SK-N-SH (cell line): ENCODE measurements at regions of chr20 and their contacts with region 1.

Region 1: GRCh38 chr20:44475694-44476560 is at the start of gene TTPAL:
- DNase-seq: peak; percentile 97
- H3K4me3 ChIP-seq: peak within 1 kb of the TSS; percentile 81 to 82
- H3K27ac ChIP-seq: peak within 1 kb of the TSS; percentile 72 to 89
- H3K4me1 ChIP-seq: peaks cover 0 to 16% of the 10 kb centered on the region in 2 experiments; a peak in 2 of 4 replicates
- H3K27me3 ChIP-seq: no peaks in the 10 kb centered on the region
- CTCF ChIP-seq: peak; percentile 36
- EP300 ChIP-seq: no peak
- RAD21 ChIP-seq: 0 out of 2 replicates have a peak, but pooled peaks have one; percentile 16
- polyA plus RNA-seq, gene TTPAL: 4.9 and 5.7 TPM in 2 replicates

Region 2: DNA sequence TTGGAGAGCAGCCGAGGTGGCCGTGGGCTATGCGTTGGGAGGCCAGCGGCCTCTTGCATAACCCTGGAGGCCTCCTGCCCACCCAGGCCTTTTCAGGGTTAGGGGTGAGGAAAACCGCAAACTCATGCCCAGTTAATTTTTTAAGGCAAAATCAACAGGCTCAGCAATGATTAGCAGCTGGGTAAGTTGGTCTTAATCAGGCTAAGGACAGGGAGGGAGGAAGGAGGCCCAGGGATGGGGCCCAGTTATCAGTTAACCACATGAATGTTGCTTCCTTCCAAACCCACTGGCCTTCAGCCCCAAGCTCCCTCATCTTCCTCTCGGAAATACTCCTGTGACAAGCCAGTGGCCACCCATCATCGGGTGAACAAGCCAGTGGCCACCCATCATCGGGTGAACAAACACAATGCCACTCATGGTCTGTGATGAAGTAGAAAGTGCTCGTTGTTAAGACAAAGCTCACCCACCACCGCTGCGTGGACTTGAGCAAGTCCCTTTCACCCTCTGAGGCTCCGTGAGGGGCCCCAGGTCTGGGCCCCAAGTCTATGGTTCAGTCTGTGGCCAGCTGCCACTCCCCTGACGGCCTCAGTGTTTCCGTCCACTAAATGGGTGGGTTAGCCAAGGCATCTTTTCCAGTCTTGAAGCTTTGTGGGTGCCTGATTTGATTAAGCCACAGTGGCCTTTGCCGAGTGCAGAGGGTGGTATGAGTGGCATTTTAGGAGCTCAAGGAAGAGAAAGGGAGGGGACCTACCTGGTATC is 81.0 kb before region 1 on chr20:
- CTCF ChIA-PET with region 1: interaction called, 12 read pairs
- POLR2A ChIA-PET with region 1: no interaction called
- DNase-seq: no peak
- H3K4me3 ChIP-seq: no peak overlapping the region
- H3K27ac ChIP-seq: no peak overlapping the region
- H3K4me1 ChIP-seq: no peaks in the 10 kb centered on the region
- H3K27me3 ChIP-seq: peaks cover 11% of the 10 kb centered on the region; the same call in 1 of the 2 replicates
- CTCF ChIP-seq: no peak
- EP300 ChIP-seq: no peak
- RAD21 ChIP-seq: no peak

Region 3: GRCh38 chr20:44460795-44461141 is 15.2 kb before region 1 on chr20:
- CTCF ChIA-PET with region 1: interaction called, 22 read pairs
- POLR2A ChIA-PET with region 1: no interaction called
- DNase-seq: peak; percentile 57
- H3K4me3 ChIP-seq: no peak overlapping the region
- H3K27ac ChIP-seq: no peak overlapping the region
- H3K4me1 ChIP-seq: peaks cover 0 to 4% of the 10 kb centered on the region in 2 experiments; a peak in 1 of 4 replicates
- H3K27me3 ChIP-seq: no peaks in the 10 kb centered on the region
- CTCF ChIP-seq: peak; percentile 67
- EP300 ChIP-seq: no peak
- RAD21 ChIP-seq: peak; percentile 84